ENCODE measurements at regions of chr13 and their contacts with region 1.

Region 1: GRCh38 chr13:49300739-49301589 is 53.2 kb downstream of the CDADC1 start:
- DNase-seq: no peak
- H3K4me3 ChIP-seq: peak overlapping the region in 3 of 4 donors; percentile 32 to 55 (median 33)
- H3K27ac ChIP-seq: peak overlapping the region in 2 of 4 donors; percentile 51 to 67
- H3K4me1 ChIP-seq: peaks cover 6 to 54% (median 12%) of the 10 kb centered on the region in 3 donors
- H3K27me3 ChIP-seq: no peaks in the 10 kb centered on the region
- CTCF ChIP-seq: peak; percentile 71 to 91 (median 90)
- POLR2A ChIP-seq: no peak

Region 2: GRCh38 chr13:49436890-49437289 is 135.9 kb after region 1 on chr13:
- intact Hi-C with region 1: loop called (anchors 5 kb)
- DNase-seq: no peak
- H3K4me3 ChIP-seq: no peak overlapping the region
- H3K27ac ChIP-seq: no peak overlapping the region
- H3K4me1 ChIP-seq: no peaks in the 10 kb centered on the region
- H3K27me3 ChIP-seq: no peaks in the 10 kb centered on the region
- CTCF ChIP-seq: peak in 4 of 6 experiments; percentile 15 to 45 (median 27)
- POLR2A ChIP-seq: no peak

Region 3: DNA sequence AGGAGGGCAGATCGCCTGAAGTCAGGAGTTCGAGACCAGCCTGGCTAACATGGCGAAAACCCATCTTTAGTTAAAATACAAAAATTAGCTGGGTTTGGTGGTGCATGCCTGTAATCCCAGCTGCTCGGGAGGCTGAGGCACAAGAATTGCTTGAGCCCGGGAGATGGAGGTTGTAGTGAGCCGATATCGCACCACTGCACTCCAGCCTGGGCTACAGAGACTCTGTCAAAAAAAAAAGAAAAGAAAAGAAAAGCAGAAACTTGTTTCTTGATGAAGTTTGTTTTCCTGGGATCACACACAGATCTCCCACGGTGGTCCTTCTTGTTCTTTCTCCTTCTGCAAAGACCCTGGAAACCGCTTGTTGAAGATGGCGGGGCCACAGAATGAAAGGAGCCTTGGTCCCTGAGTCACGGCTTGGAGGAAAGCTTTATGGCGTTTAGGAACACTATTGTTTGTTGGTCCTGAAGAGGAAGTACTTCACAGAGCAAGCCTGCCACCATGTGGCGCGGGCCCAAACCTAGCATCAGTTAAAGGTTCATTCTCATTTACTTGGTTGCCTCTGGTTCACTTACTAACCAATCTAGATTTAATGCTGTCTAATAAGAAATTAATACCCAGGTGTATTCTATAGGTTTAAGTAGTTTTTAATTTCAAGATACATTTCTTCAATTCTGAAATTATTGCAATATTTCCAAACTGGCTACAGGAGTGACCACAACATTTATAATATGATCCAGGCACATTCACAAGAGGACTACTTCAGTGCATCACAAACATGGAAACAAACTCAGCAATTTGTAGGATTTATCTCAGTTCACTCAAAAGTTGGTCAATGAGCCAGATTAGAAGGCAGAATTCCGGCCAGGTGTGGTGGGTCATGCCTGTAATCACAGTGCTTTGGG is 306.0 kb after region 1 on chr13:
- intact Hi-C with region 1: loop called (anchors 5 kb)
- DNase-seq: peak; percentile 32
- H3K4me3 ChIP-seq: peak overlapping the region; percentile 14 to 36 (median 26)
- H3K27ac ChIP-seq: peak overlapping the region in 1 of 4 donors; percentile 23
- H3K4me1 ChIP-seq: peaks cover 0 to 19% (median 0%) of the 10 kb centered on the region in 3 donors
- H3K27me3 ChIP-seq: no peaks in the 10 kb centered on the region
- CTCF ChIP-seq: peak; percentile 61 to 86 (median 80)
- POLR2A ChIP-seq: no peak

Measured in esophagus squamous epithelium (tissue), 5 donors.